WTC11 (cell line): ENCODE measurements at regions of chr19 and their contacts with region 1.

Region 1: GRCh38 chr19:49415102-49415809 is 8.0 kb downstream of the PTH2 start:
- DNase-seq: no peak
- ATAC-seq: no peak
- H3K4me3 Mint-ChIP-seq: no peak overlapping the region
- H3K27ac Mint-ChIP-seq: no peak overlapping the region; the same call in 1 of the 2 replicates
- H3K4me1 Mint-ChIP-seq: peaks cover 55% of the 10 kb centered on the region
- H3K27me3 Mint-ChIP-seq: peaks cover 27% of the 10 kb centered on the region
- CTCF ChIP-seq: no peak

Region 2: GRCh38 chr19:49282184-49282583 is 133.1 kb before region 1 on chr19:
- CTCF ChIA-PET with region 1: no interaction called
- POLR2A ChIA-PET with region 1: no interaction called
- DNase-seq: no peak
- ATAC-seq: no peak
- H3K4me3 Mint-ChIP-seq: no peak overlapping the region
- H3K27ac Mint-ChIP-seq: no peak overlapping the region
- H3K4me1 Mint-ChIP-seq: no peaks in the 10 kb centered on the region
- H3K27me3 Mint-ChIP-seq: peaks cover 12% of the 10 kb centered on the region
- CTCF ChIP-seq: no peak

Region 3: GRCh38 chr19:49301165-49301865 is 113.9 kb before region 1 on chr19:
- CTCF ChIA-PET with region 1: interaction called, 12 read pairs
- POLR2A ChIA-PET with region 1: no interaction called
- DNase-seq: peak; percentile 93
- ATAC-seq: peak; percentile 100
- H3K4me3 Mint-ChIP-seq: no peak overlapping the region
- H3K27ac Mint-ChIP-seq: no peak overlapping the region
- H3K4me1 Mint-ChIP-seq: peaks cover 2% of the 10 kb centered on the region; the same call in 1 of the 2 replicates
- H3K27me3 Mint-ChIP-seq: peaks cover 9% of the 10 kb centered on the region
- CTCF ChIP-seq: peak; percentile 97

Region 4: GRCh38 chr19:49363268-49364082 is 51.8 kb before region 1 on chr19 and contains the start of gene DKKL1:
- CTCF ChIA-PET with region 1: interaction called, 12 read pairs
- POLR2A ChIA-PET with region 1: interaction called, 3 read pairs
- DNase-seq: peak; percentile 100
- ATAC-seq: peak; percentile 88
- H3K4me3 Mint-ChIP-seq: no peak within 1 kb of the TSS
- H3K27ac Mint-ChIP-seq: no peak within 1 kb of the TSS
- H3K4me1 Mint-ChIP-seq: peaks cover 8% of the 10 kb centered on the region
- H3K27me3 Mint-ChIP-seq: peaks cover 5% of the 10 kb centered on the region
- CTCF ChIP-seq: no peak
- total RNA-seq, gene DKKL1: 2.4 to 3.0 TPM (median 2.9 TPM) in 3 replicates

Region 5: DNA sequence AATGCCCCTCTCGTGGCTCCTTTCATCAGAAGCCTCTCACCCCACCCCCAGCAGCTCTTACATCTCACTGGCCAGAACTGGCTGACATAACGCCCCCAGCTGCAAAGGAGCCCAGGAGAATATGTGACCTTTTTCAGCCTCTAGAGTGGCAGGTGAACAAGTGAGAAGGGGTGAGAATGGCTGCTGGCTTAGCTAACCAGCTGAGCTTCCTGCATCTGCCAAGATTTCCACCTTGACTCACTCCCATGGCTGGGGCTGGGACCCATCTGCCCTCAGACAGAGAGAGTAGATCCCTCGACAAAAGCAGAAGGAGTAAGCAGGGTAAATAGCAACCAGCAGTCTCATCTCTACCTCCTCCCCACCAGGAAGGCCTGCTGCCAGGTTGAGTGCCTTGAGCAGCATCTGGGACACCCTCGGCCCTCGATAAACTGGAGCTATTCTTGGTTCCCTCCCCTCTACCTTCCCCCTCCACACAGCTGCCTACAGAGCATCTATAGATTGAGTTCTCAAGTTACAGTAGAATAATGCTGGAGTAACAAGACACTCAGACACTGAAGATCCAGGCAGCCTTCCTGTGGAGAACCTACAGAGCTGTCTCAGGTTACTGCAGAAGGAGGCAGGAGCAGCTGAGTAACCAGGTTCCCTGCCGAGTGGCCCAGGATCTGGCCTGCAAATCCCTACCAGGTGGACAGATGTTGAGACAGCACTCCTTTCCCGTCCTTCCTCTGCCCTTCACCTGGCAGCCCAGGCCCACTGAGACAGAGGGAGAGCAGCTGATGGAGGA is 11.7 kb before region 1 on chr19:
- CTCF ChIA-PET with region 1: interaction called, 30 read pairs
- POLR2A ChIA-PET with region 1: interaction called, 13 read pairs
- DNase-seq: peak; percentile 81
- ATAC-seq: peak; percentile 98
- H3K4me3 Mint-ChIP-seq: peak overlapping the region; percentile 44
- H3K27ac Mint-ChIP-seq: peak overlapping the region; percentile 99
- H3K4me1 Mint-ChIP-seq: peaks cover 45% of the 10 kb centered on the region
- H3K27me3 Mint-ChIP-seq: peaks cover 4% of the 10 kb centered on the region; the same call in 1 of the 2 replicates
- CTCF ChIP-seq: no peak

Region 6: GRCh38 chr19:49430678-49431329 is 15.5 kb after region 1 on chr19:
- CTCF ChIA-PET with region 1: interaction called, 17 read pairs
- POLR2A ChIA-PET with region 1: no interaction called
- DNase-seq: no peak
- ATAC-seq: no peak
- H3K4me3 Mint-ChIP-seq: no peak overlapping the region
- H3K27ac Mint-ChIP-seq: no peak overlapping the region
- H3K4me1 Mint-ChIP-seq: peaks cover 58% of the 10 kb centered on the region
- H3K27me3 Mint-ChIP-seq: peaks cover 98% of the 10 kb centered on the region
- CTCF ChIP-seq: peak; percentile 21; the same call in 1 of the 2 replicates

Region 7: DNA sequence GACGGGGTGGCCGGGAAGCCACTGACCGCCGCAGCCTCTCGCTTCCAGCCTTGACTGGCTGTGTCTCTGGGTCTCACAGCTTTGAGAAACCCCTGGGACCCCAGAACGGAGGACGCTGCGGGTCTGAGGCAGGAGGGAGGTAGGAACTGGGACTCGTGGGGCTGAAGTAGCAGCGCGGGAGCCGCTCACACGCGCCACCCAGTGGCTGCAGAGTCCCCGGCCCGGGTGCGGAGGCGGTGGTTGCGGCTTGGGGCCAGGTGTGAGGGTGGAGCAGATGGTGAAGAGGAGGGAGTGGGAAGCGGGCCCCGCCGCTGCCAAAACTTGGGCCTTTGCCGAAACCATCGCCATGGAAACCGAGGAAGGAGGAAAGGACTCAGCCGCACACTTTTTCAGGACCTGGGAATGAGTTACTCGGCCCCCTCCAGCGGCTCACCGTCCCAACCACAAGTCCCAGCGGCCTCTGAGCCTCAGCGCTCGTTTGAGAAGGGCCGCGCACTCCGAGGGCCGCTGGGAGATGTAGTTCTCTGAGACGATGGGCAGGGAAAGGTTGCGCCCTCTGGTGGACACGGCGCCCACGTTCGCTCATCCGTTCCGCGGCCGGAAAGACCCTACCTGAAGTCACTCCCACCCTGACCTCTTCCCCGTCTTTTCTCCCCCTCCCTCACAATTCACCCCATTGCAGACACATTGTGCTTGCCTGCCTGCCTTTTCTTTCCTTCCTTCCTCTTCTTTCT is 28.3 kb after region 1 on chr19:
- CTCF ChIA-PET with region 1: interaction called, 10 read pairs
- POLR2A ChIA-PET with region 1: no interaction called
- DNase-seq: peak; percentile 97
- ATAC-seq: peak; percentile 43
- H3K4me3 Mint-ChIP-seq: peak overlapping the region; percentile 63
- H3K27ac Mint-ChIP-seq: no peak overlapping the region
- H3K4me1 Mint-ChIP-seq: peaks cover 35% of the 10 kb centered on the region
- H3K27me3 Mint-ChIP-seq: peaks cover 39% of the 10 kb centered on the region
- CTCF ChIP-seq: peak; percentile 79

Region 8: GRCh38 chr19:49453757-49454240 is 38.5 kb after region 1 on chr19:
- CTCF ChIA-PET with region 1: no interaction called
- POLR2A ChIA-PET with region 1: no interaction called
- DNase-seq: no peak
- ATAC-seq: no peak
- H3K4me3 Mint-ChIP-seq: peak overlapping the region; percentile 94
- H3K27ac Mint-ChIP-seq: peak overlapping the region; percentile 100
- H3K4me1 Mint-ChIP-seq: peaks cover 21% of the 10 kb centered on the region
- H3K27me3 Mint-ChIP-seq: no peaks in the 10 kb centered on the region
- CTCF ChIP-seq: no peak

Region 9: DNA sequence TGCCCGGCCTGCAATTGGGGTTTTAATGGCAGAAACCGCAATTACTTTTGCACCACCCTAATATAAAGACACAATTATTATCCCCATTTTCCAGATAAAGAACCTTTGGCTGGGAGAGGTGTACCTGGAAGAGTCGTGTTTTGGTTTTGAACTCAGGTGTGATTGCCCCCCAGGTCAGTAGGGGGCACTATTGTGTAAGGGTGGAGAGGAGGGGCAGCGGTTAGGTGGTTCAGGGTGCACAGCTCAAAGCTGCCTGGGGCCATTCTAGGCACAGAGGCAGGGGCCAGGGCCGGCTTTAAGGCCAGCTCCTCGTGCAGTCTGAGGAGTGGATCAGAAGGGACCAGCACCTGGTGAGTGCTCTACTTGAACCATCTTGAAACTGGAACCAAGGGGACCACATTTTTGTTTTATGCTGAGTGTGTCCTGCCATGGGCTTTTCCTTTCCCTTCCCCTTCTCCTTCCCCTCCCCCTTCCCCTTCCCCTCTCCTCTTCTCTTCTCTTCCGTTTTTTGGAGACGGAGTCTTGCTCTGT is 91.4 kb after region 1 on chr19:
- CTCF ChIA-PET with region 1: no interaction called
- POLR2A ChIA-PET with region 1: no interaction called
- DNase-seq: peak; percentile 89
- ATAC-seq: peak; percentile 90
- H3K4me3 Mint-ChIP-seq: peak overlapping the region; percentile 35; the same call in 1 of the 2 replicates
- H3K27ac Mint-ChIP-seq: no peak overlapping the region
- H3K4me1 Mint-ChIP-seq: peaks cover 9% of the 10 kb centered on the region
- H3K27me3 Mint-ChIP-seq: no peaks in the 10 kb centered on the region; the same call in 1 of the 2 replicates
- CTCF ChIP-seq: peak; percentile 88